Mammary epithelial cell (primary cell): ENCODE measurements at regions of chr16 and their contacts with region 1.

Region 1: DNA sequence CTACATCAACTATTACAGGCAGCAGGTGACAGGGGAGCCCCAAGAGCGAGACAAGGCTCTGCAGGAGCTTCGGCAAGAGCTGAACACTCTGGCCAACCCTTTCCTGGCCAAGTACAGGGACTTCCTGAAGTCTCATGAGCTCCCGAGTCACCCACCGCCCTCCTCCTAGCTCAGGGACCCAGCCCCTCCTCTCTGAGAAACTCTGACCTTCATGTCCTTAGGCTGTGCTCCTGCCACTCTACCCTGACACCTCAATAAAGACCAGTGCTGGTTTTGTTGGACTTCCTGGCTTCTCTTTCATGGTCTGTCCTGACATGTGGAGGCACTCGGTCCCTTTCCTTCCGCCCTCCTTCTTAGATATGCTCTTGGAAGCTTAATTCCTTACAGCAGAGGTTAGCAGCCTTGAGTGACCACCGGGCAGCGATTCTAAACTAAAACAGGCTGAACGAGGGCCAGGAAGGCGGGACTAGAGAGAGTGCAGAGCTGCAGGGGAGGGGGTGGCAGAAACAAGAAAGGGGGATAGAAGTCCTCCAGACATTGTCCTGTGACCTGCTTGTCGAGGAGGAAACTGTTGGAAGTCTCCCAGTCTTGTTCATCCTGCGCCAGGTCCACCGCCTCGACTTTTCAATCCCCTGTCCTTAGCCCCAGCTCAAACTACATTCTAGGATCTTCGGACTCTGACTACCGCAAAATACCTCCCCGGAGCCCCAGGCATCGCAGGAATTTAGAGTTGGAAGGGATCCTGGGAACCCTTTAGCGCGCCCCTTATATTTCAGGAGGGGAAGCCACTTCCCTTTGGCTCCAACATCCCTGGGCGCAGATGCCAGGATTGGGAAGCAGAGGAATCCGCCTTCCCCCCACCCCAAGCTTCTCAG is 1.1 kb downstream of the AHSP start:
- DNase-seq: no peak
- H3K4me3 ChIP-seq: no peak overlapping the region
- H3K27ac ChIP-seq: no peak overlapping the region
- H3K4me1 ChIP-seq: no peaks in the 10 kb centered on the region
- H3K27me3 ChIP-seq: peaks cover 20% of the 10 kb centered on the region
- CTCF ChIP-seq: no peak

Region 2: DNA sequence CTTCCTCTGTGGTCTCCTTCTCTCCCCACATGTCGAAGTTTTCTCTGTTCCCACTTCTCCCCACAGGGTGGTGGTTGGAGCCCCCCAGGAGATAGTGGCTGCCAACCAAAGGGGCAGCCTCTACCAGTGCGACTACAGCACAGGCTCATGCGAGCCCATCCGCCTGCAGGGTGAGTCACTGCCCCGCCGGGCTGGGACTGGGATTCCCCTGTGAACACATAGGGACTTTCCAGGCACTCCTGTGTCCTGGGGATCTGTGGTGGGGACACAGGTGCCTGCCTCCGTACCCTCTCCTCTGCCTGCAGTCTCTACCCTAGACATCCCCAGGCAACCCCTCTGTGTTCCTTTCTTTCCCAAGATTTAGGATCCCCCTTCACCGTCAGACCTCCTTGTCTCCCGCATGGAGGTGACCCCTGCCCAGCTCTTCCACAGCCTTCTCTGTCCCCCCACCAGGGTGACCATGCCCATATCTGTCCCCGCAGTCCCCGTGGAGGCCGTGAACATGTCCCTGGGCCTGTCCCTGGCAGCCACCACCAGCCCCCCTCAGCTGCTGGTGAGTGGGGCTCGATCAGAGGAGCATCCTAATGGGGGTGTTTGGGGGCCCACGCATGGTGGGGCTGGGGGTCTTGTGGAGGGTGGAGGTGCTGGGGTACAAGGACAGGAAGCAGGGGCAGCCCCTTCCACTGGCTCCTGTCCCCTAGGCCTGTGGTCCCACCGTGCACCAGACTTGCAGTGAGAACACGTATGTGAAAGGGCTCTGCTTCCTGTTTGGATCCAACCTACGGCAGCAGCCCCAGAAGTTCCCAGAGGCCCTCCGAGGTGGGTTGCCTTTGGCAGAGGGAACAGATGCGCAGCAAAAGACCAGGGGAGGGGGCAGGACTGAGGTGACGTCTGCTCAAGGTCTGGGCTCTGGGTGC is 263.2 kb before region 1 on chr16:
- CTCF ChIA-PET with region 1: no interaction called
- dilution Hi-C with region 1: no loop called
- in situ Hi-C with region 1: no loop called
- intact Hi-C with region 1: no loop called
- DNase-seq: peak; percentile 90
- H3K4me3 ChIP-seq: no peak overlapping the region
- H3K27ac ChIP-seq: peak overlapping the region; percentile 56
- H3K4me1 ChIP-seq: peaks cover 14% of the 10 kb centered on the region
- H3K27me3 ChIP-seq: no peaks in the 10 kb centered on the region
- CTCF ChIP-seq: peak in 1 of 2 donors; percentile 23

Region 3: DNA sequence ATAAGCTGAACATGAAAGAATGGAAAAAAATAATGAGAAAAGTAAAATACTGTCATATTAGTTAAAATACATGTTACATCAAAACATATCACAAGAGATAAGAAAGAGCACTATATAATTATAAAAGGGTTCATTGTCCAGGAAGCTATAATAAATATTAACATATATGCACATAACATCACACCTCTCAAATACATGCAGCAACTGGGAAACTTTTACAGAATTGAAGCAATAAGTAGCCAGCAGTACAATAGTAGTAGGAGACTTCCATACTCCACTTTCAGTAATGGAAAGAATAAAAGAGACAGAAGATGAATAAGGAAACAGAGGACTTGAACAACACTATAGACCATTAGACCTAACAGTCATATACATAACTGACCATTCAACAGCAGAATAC is 89.4 kb after region 1 on chr16:
- CTCF ChIA-PET with region 1: no interaction called
- dilution Hi-C with region 1: loop called (anchors 5 kb)
- in situ Hi-C with region 1: no loop called
- intact Hi-C with region 1: no loop called
- DNase-seq: no peak
- H3K4me3 ChIP-seq: no peak overlapping the region
- H3K27ac ChIP-seq: no peak overlapping the region
- H3K4me1 ChIP-seq: no peaks in the 10 kb centered on the region
- H3K27me3 ChIP-seq: no peaks in the 10 kb centered on the region
- CTCF ChIP-seq: no peak

Region 4: GRCh38 chr16:31674686-31675085 is 145.9 kb after region 1 on chr16:
- CTCF ChIA-PET with region 1: no interaction called
- dilution Hi-C with region 1: loop called (anchors 5 kb)
- in situ Hi-C with region 1: no loop called
- intact Hi-C with region 1: no loop called
- DNase-seq: no peak
- H3K4me3 ChIP-seq: no peak overlapping the region
- H3K27ac ChIP-seq: no peak overlapping the region
- H3K4me1 ChIP-seq: no peaks in the 10 kb centered on the region
- H3K27me3 ChIP-seq: no peaks in the 10 kb centered on the region
- CTCF ChIP-seq: no peak

Region 5: DNA sequence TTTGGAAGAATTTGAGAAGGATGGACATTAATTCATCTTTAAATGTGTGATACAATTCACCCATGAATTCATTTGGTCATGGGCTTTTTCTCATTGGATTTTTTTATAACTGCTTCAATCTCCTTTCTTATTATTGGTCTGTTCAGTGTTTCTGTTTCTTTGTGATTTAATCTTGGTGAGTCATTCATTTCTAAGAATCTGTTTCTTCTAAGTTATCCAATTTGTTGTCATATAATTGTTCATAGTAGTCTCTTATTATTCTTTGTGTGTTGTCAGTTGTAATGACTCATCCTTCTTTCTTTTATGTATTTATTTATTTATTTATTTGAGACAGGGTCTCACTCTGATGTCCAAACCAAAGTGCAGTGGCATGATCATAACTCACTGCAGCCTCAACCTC is 198.8 kb after region 1 on chr16:
- CTCF ChIA-PET with region 1: no interaction called
- dilution Hi-C with region 1: loop called (anchors 10 kb)
- in situ Hi-C with region 1: no loop called
- intact Hi-C with region 1: no loop called
- DNase-seq: no peak
- H3K4me3 ChIP-seq: no peak overlapping the region
- H3K27ac ChIP-seq: no peak overlapping the region
- H3K4me1 ChIP-seq: no peaks in the 10 kb centered on the region
- H3K27me3 ChIP-seq: no peaks in the 10 kb centered on the region
- CTCF ChIP-seq: no peak